Upper lobe of right lung (tissue), 1 donor: ENCODE measurements at regions of chr3 and their contacts with region 1.

Region 1: GRCh38 chr3:9067352-9067975 is 104.2 kb upstream of the RAD18 start:
- DNase-seq: no peak
- ATAC-seq: peak; percentile 77
- H3K4me3 ChIP-seq: no peak overlapping the region
- H3K27ac ChIP-seq: no peak overlapping the region
- H3K4me1 ChIP-seq: peaks cover 3% of the 10 kb centered on the region
- H3K27me3 ChIP-seq: no peaks in the 10 kb centered on the region
- CTCF ChIP-seq: peak; percentile 83

Region 2: GRCh38 chr3:8970971-8971589 is 96.4 kb before region 1 on chr3:
- intact Hi-C with region 1: loop called (anchors 10 kb)
- DNase-seq: no peak
- ATAC-seq: peak; percentile 86
- H3K4me3 ChIP-seq: no peak overlapping the region
- H3K27ac ChIP-seq: no peak overlapping the region
- H3K4me1 ChIP-seq: peaks cover 3% of the 10 kb centered on the region
- H3K27me3 ChIP-seq: peaks cover 7% of the 10 kb centered on the region
- CTCF ChIP-seq: peak; percentile 99

Region 3: GRCh38 chr3:9497821-9498565 is 430.5 kb after region 1 on chr3:
- intact Hi-C with region 1: no loop called
- DNase-seq: no peak
- ATAC-seq: no peak
- H3K4me3 ChIP-seq: no peak overlapping the region
- H3K27ac ChIP-seq: no peak overlapping the region
- H3K4me1 ChIP-seq: peaks cover 9% of the 10 kb centered on the region
- H3K27me3 ChIP-seq: peaks cover 27% of the 10 kb centered on the region
- CTCF ChIP-seq: no peak